ENCODE measurements at regions of chr6 and their contacts with region 1.

Region 1: DNA sequence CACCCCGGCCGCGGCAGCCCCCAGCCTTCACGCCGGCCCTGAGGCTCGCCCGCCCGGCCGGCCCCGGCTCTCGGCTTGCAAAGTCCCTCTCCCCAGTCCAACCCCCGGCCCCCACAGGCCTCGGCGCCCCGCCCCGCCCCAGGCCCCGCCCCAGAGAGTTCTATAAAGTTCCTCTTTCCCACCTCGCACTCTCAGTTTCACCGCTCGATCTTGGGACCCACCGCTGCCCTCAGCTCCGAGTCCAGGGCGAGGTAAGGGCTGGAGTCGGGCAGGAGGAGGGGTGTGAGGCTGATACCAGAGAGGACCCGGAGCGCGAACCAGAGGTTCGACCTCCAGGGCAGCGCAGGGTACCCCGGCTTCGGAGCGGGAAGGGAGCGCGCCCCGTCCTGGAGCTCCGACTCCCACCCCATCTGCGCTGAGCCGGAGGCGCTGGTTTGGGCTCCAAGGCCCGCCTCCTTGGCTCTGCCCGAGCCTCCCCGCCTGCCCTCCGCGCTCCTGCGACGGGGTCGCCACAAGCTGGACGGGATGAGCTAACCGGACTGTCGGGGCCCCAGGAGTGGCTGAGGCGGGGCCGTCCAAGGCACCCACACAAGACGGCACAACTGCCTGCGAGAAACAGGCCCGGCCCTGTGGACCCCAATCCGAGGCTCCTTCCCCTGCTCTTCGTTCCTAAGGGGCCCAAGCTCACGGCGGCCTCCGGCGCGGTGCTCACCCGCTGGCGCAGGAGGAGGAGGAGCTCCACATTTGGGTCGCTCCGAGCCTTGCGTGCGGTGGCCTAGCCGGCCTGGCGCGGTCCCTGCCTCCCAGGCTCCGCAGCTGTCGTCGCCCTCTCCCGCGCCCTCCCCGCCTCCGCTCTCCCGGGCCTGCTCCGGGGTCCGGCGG is at the start of gene IRF4:
- DNase-seq: no peak
- ATAC-seq: no peak
- H3K4me3 ChIP-seq: no peak within 1 kb of the TSS
- H3K27ac ChIP-seq: no peak within 1 kb of the TSS
- H3K4me1 ChIP-seq: no peaks in the 10 kb centered on the region
- H3K27me3 ChIP-seq: peaks cover 68% of the 10 kb centered on the region
- CTCF ChIP-seq: no peak
- total RNA-seq, gene IRF4: 0.15 TPM in 1 of 2 replicates, not detected in the other

Region 2: DNA sequence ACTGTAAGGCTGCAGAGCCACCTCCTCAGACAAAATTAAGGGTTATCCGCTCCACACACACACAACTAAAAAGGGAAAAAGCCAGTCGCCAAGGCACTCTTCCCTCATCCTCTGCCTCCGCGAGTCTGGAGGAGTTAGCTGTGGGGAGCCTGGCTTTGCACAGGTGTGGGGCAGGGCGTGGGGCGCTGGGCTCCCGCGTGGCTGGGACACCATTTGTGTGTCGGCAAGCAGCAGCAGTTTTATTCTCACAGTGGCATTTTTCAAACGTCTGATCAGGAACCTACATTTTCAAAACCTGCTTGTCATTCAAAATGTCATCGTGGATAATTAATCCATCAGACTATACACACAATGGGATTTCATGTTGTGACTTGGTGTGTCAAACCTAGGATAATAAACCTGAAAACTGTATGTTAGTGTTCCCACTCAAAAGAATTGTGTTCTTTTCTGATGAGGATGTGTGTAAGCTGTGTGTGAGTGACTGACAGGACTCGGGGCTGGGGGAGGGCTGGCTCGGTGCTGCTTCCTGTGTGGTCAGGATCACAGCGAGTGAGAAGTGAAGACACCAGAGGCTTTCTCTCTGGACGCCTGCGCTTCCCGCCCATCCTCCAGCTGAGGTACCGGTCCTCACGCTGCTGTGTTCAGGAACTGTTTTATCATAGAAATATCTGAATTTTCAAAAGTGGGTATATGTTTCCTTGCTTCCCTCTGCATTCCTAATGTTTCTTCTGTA is 82.8 kb after region 1 on chr6:
- CTCF ChIA-PET with region 1: no interaction called
- POLR2A ChIA-PET with region 1: no interaction called
- intact Hi-C with region 1: loop called (anchors 10 kb)
- DNase-seq: peak; percentile 20
- ATAC-seq: peak; percentile 71
- H3K4me3 ChIP-seq: no peak overlapping the region
- H3K27ac ChIP-seq: no peak overlapping the region
- H3K4me1 ChIP-seq: no peaks in the 10 kb centered on the region
- H3K27me3 ChIP-seq: no peaks in the 10 kb centered on the region
- CTCF ChIP-seq: no peak

Region 3: DNA sequence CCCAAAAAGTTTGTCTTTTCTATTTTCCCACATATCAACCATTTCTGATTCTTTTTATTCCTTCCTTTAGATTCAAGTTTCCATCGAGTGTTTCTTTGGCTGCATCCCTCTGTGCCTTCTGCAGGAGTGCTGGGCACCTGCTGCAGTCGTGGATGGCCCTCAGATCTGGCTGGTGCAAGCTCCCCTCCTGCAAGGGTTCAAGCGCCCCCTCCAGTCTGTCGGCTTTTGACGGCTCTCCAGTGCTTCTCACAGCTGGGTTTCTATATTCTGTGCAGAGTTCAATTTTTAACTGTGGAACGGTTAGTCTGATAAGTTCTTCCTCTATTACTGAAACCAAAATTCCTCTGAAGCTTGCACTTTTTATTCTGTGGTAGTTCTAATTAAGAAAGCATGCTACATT is 133.0 kb after region 1 on chr6:
- CTCF ChIA-PET with region 1: no interaction called
- POLR2A ChIA-PET with region 1: no interaction called
- intact Hi-C with region 1: no loop called
- DNase-seq: no peak
- ATAC-seq: no peak
- H3K4me3 ChIP-seq: no peak overlapping the region
- H3K27ac ChIP-seq: no peak overlapping the region
- H3K4me1 ChIP-seq: no peaks in the 10 kb centered on the region
- H3K27me3 ChIP-seq: no peaks in the 10 kb centered on the region
- CTCF ChIP-seq: no peak; the same call in 1 of the 2 replicates

Measured in PC-3 (cell line).